ENCODE measurements at regions of chr12 and their contacts with region 1.

Region 1: DNA sequence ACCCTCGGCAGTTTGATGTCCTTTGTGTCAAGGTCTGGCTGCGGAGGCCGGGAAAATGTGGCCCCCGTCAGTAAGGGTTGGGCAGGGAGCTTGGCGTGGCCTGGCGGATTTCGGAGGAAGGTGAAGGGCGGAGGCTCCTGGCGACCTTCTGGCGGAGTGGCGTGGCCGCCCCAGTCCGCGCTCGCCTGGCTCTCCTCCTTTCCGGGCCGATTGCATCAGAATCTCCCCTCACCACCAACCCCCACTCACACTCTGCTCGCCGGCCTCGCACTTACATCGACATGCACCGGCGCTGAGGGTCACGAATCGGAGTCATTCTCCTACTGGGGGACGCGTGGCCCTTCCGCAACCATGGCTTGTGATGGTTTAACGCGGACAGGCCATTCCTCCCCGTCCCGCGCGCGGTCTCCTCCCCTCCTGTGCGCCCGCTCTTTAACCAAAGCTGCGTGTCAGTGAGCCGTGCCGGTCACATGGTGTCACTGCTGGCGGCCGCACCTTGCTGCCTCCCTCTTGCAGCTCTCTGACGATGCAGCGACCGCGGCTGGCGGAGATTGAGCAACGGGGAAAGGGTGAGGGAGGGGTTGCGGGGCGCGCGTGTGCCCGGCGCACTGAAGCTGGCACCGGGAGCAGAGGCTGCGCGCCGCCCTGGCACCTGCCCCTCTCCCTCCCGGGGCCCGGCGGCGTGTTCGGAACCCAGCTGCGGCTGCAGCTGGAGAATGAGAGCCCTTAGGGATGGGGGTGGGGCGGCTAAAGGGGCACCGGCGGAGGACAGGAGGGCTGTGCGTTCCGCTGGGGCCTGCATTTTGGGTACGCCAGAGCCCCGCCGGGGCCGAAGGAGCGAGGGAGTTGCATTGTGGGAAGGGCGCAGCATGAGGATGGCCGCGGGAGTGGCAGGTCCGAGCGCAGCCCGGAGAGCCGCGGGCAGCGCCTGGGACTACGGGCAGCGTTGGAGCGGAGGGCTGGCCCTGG is at the start of gene SLC38A1:
- DNase-seq: peak; percentile 86
- H3K4me3 Mint-ChIP-seq: no peak within 1 kb of the TSS
- H3K27ac Mint-ChIP-seq: no peak within 1 kb of the TSS
- H3K4me1 Mint-ChIP-seq: peaks cover 26% of the 10 kb centered on the region
- H3K27me3 Mint-ChIP-seq: no peaks in the 10 kb centered on the region
- total RNA-seq, gene SLC38A1: 152 and 154 TPM in 2 replicates

Region 2: DNA sequence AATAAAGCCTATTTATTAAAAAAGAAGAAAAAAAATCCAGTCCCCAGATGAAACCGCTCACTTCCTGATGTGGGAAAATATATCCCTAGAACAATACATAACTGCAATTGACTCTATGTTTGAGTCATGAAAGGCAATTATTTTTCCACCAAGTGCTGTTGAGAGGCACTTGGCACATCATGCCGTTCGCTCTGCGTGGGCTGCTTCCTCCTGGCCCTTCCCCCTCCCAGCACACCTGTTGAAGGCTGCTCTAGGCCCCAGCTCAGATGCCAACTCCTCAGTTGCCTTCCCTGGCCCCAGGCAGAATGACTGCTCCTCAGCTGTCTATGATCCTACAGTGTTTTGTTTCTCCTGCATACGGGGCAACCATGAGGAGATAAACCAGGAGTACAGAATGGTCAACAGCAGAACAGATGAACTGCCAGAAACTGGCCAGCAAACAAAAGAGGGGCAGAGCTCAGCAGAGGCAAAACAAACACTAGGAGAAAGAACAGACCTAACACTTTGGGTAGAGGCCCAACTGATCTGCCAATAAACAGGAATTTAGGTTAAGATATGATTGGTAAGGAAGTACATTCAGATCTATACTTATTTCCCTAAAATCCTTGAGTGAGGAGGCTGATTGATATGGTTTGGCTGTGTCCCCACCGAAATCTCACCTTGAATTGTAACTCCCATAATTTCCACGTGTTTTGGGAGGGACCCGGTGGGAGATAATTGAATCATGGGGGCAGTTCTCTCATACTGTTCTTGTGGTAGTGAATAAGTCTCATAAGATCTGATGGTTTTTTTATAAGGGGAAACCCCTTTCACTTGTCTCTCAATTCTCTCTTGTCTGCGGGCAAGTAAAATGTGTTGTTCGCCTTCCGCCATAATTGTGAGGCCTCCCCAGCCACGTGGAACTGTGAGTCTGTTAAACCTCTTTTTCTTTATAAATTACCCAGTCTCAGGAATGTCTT is 58.7 kb before region 1 on chr12:
- intact Hi-C with region 1: loop called (anchors 1 kb)
- DNase-seq: peak; percentile 36
- H3K4me3 Mint-ChIP-seq: peak overlapping the region; percentile 45
- H3K27ac Mint-ChIP-seq: peak overlapping the region; percentile 96
- H3K4me1 Mint-ChIP-seq: peaks cover 63% of the 10 kb centered on the region
- H3K27me3 Mint-ChIP-seq: no peaks in the 10 kb centered on the region

Region 3: GRCh38 chr12:46608431-46609272 is 339.8 kb after region 1 on chr12:
- intact Hi-C with region 1: loop called (anchors 5 kb)
- DNase-seq: no peak
- H3K4me3 Mint-ChIP-seq: peak overlapping the region; percentile 37
- H3K27ac Mint-ChIP-seq: peak overlapping the region; percentile 65
- H3K4me1 Mint-ChIP-seq: peaks cover 37% of the 10 kb centered on the region
- H3K27me3 Mint-ChIP-seq: no peaks in the 10 kb centered on the region

Measured in activated T-helper 2 cell treated with anti-CD3 and anti-CD28 coated beads, Interferon-gamma antibody, Interleukin-2, Interleukin-4, amounts not matched to agents 10 μg/mL and 5 μg/mL and 100 μg/mL, durations not matched to agents 14 hours and 24 hours and 36 hours (primary cell).